Activated CD4-positive, alpha-beta T cell treated with anti-CD3 and anti-CD28 coated beads for 36 hours (primary cell): ENCODE measurements at regions of chr9 and their contacts with region 1.

Region 1: DNA sequence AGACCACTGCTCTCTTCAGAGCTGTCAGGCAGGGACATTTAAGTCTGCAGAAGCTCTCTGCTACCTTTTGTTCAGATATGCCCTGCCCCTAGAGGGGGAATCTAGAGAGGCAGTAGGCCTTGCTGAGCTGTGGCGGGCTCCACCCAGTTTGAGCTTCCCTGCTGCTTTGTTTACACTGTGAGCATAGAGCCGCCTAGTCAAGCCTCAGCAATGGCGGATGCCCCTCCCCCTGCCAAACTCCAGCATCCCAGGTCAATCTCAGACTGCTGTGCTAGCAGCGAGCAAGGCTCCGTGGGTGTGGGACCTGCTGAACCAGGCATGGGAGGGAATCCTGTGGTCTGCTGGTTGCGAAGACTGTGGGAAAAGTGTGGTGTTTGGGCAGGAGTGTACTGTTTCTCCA is 59.9 kb downstream of the CAVIN4 start:
- DNase-seq: no peak
- ATAC-seq: no peak
- H3K4me3 Mint-ChIP-seq: no peak overlapping the region
- H3K27ac Mint-ChIP-seq: no peak overlapping the region
- H3K4me1 Mint-ChIP-seq: no peaks in the 10 kb centered on the region
- H3K27me3 Mint-ChIP-seq: peaks cover 11% of the 10 kb centered on the region

Region 2: DNA sequence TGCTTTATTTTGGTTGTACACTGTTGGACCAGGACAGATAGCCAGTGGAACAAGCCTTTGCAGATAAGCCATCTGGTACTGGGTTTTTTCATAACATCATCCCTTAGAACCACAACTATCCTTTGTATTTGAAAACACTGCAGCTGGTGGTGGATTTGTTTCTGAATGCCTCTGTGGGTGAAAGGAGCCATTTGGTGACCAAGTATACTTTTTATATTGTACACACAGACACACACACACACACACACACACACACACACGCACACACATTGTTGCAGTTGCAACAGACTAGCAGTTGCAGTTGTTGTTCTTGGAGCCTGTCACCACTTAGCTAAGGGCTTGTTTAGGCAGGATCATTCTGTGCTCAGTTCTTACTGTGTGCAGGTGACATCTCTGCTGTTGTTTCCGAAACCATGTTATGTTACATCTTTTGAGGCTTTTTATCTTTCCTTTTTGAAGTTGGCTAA is 82.8 kb before region 1 on chr9:
- CTCF ChIA-PET with region 1: no interaction called
- POLR2A ChIA-PET with region 1: interaction called, 12 read pairs
- intact Hi-C with region 1: no loop called
- DNase-seq: no peak
- ATAC-seq: no peak
- H3K4me3 Mint-ChIP-seq: no peak overlapping the region
- H3K27ac Mint-ChIP-seq: no peak overlapping the region
- H3K4me1 Mint-ChIP-seq: no peaks in the 10 kb centered on the region
- H3K27me3 Mint-ChIP-seq: no peaks in the 10 kb centered on the region

Region 3: DNA sequence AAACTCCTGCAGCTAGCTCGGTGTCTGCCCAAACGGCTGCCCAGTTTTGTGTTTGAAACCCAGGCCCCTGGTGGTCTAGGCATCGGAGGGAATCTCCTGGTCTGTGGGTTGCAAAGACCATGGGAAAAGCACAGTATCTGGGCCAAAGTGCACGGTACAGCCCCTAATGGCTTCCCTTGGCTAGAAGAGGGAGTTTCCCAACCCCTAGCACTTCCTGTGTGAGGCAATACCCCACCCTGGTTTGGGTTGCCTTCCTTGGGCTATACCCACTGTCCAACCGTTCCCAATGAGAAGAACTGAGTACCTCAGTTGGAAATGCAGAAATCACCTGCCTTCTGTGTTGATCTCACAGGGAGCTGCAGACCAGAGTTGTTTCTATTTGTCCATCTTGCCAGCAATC is 18.1 kb before region 1 on chr9:
- CTCF ChIA-PET with region 1: no interaction called
- POLR2A ChIA-PET with region 1: no interaction called
- intact Hi-C with region 1: no loop called
- DNase-seq: no peak
- ATAC-seq: no peak
- H3K4me3 Mint-ChIP-seq: no peak overlapping the region
- H3K27ac Mint-ChIP-seq: no peak overlapping the region
- H3K4me1 Mint-ChIP-seq: no peaks in the 10 kb centered on the region
- H3K27me3 Mint-ChIP-seq: peaks cover 13% of the 10 kb centered on the region

Region 4: GRCh38 chr9:100674419-100675122 is 36.8 kb after region 1 on chr9:
- CTCF ChIA-PET with region 1: no interaction called
- POLR2A ChIA-PET with region 1: no interaction called
- intact Hi-C with region 1: loop called in 1 of 2 experiments (anchors 1 kb)
- DNase-seq: no peak
- ATAC-seq: no peak
- H3K4me3 Mint-ChIP-seq: no peak overlapping the region
- H3K27ac Mint-ChIP-seq: no peak overlapping the region
- H3K4me1 Mint-ChIP-seq: no peaks in the 10 kb centered on the region
- H3K27me3 Mint-ChIP-seq: peaks cover 4% of the 10 kb centered on the region

Region 5: GRCh38 chr9:100714372-100715099 is 76.7 kb after region 1 on chr9:
- CTCF ChIA-PET with region 1: no interaction called
- POLR2A ChIA-PET with region 1: no interaction called
- intact Hi-C with region 1: no loop called
- DNase-seq: peak; percentile 77
- ATAC-seq: peak; percentile 53
- H3K4me3 Mint-ChIP-seq: no peak overlapping the region
- H3K27ac Mint-ChIP-seq: no peak overlapping the region
- H3K4me1 Mint-ChIP-seq: no peaks in the 10 kb centered on the region
- H3K27me3 Mint-ChIP-seq: peaks cover 5% of the 10 kb centered on the region